ENCODE measurements at regions of chr10 and their contacts with region 1.

Region 1: GRCh38 chr10:122051251-122051996 is 62.5 kb downstream of the TACC2 start:
- DNase-seq: peak; percentile 92
- ATAC-seq: peak; percentile 60
- H3K4me3 ChIP-seq: no peak overlapping the region
- H3K27ac ChIP-seq: peak overlapping the region; percentile 92
- H3K4me1 ChIP-seq: peaks cover 36% of the 10 kb centered on the region
- H3K27me3 ChIP-seq: no peaks in the 10 kb centered on the region
- CTCF ChIP-seq: peak; percentile 83

Region 2: DNA sequence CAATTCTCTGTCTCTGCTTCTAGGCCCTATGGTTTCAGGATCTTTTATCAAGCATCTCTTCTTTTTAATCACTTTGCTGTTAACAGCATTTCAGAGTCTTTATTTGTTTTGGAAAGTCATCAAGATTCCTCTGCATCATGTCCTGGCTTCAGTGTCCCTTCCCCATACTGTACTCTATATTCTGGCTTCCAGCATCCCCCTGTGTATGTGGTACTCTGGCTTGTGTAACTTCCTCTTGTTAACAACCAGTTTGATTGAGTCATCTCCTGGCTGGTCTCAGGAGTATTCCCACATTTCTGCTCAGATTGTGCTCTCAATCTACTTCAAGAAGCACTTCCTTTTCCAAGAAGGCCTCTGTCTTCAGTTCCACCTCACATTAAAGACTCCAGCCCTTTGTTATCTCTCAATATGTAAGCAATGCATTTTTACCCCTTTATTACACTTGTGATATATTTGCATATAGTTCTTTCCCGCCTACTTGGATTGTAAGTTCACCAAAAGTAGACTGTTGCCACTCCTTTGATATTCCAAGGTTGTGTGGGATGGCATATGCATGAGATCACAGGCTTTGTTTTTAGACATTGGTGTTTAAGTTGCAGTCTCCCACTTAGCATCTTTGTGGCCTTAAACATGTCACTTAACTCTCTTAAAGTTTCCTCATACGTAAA is 108.5 kb before region 1 on chr10:
- CTCF ChIA-PET with region 1: no interaction called
- POLR2A ChIA-PET with region 1: no interaction called
- intact Hi-C with region 1: no loop called
- DNase-seq: peak; percentile 88
- ATAC-seq: peak; percentile 100
- H3K4me3 ChIP-seq: no peak overlapping the region
- H3K27ac ChIP-seq: peak overlapping the region; percentile 90
- H3K4me1 ChIP-seq: peaks cover 16% of the 10 kb centered on the region
- H3K27me3 ChIP-seq: no peaks in the 10 kb centered on the region
- CTCF ChIP-seq: no peak

Region 3: GRCh38 chr10:121974535-121975294 is 76.7 kb before region 1 on chr10 and contains the start of gene NSMCE4A:
- CTCF ChIA-PET with region 1: interaction called, 4 read pairs
- POLR2A ChIA-PET with region 1: no interaction called
- intact Hi-C with region 1: loop called (anchors 5 kb)
- DNase-seq: peak; percentile 71
- ATAC-seq: peak; percentile 81
- H3K4me3 ChIP-seq: peak within 1 kb of the TSS; percentile 90
- H3K27ac ChIP-seq: peak within 1 kb of the TSS; percentile 90
- H3K4me1 ChIP-seq: peaks cover 7% of the 10 kb centered on the region; the same call in 1 of the 2 replicates
- H3K27me3 ChIP-seq: no peaks in the 10 kb centered on the region
- CTCF ChIP-seq: peak; percentile 72
- total RNA-seq, gene NSMCE4A: 46.3 and 47.3 TPM in 2 replicates

Region 4: GRCh38 chr10:122068844-122069243 is 17.4 kb after region 1 on chr10:
- CTCF ChIA-PET with region 1: no interaction called
- POLR2A ChIA-PET with region 1: no interaction called
- intact Hi-C with region 1: no loop called
- DNase-seq: no peak
- ATAC-seq: no peak
- H3K4me3 ChIP-seq: no peak overlapping the region
- H3K27ac ChIP-seq: no peak overlapping the region
- H3K4me1 ChIP-seq: peaks cover 10% of the 10 kb centered on the region
- H3K27me3 ChIP-seq: no peaks in the 10 kb centered on the region
- CTCF ChIP-seq: no peak

Measured in PC-3 (cell line).